ENCODE measurements at regions of chr13 and their contacts with region 1.

Region 1: DNA sequence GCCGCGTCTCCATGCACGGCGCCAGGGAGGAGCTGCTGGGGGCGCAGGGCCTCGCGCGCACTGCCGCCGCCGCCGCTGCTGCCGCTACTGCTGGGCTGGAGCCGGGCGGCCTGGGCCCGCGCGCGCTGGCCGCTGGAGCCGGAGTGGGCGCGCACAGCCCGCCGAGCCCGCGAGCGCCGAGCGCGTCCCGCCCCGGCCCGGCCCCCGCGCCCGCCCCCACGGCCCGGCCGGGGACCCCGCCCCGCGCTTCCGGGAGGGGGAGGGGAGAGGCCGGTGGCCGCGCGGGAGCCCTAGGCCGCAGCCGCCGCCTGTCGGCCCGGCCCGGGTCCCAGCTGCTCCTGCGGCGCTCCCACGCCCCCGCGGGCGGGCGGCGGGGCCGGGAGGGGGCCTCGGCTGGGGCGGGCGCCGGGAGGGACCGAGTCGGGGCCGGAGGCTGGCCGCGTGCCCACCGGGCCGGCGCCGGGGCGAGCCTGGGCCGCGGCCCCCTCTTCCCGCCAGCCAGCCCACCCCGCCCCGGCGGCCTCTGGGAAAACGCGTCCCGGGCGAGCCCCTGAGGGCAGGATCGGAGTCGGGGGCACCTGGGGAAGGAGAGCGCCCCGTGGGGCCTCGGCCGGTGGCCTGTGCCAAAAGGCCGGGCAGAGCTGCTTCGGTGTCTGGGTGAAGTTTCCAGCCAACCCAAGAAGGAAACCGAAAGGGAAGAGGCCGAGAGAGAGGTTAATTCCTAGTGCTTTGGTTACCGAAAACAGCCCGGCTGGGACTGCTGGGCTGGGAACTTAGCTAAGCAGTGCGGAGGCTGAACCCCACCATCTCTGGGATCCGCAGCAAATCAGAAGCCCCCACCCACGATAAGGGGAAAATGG is at the start of gene STK24:
- DNase-seq: peak; percentile 66
- H3K4me3 Mint-ChIP-seq: peak within 1 kb of the TSS; percentile 98
- H3K27ac Mint-ChIP-seq: peak within 1 kb of the TSS; percentile 86
- H3K4me1 Mint-ChIP-seq: peaks cover 45% of the 10 kb centered on the region
- H3K27me3 Mint-ChIP-seq: no peaks in the 10 kb centered on the region
- total RNA-seq, gene STK24: 135 and 139 TPM in 2 replicates

Region 2: GRCh38 chr13:98509271-98510155 is 67.7 kb before region 1 on chr13:
- intact Hi-C with region 1: loop called (anchors 1 kb)
- DNase-seq: peak; percentile 31
- H3K4me3 Mint-ChIP-seq: peak overlapping the region; percentile 13
- H3K27ac Mint-ChIP-seq: peak overlapping the region; percentile 65
- H3K4me1 Mint-ChIP-seq: peaks cover 80% of the 10 kb centered on the region
- H3K27me3 Mint-ChIP-seq: no peaks in the 10 kb centered on the region

Region 3: GRCh38 chr13:98542568-98543377 is 34.4 kb before region 1 on chr13:
- intact Hi-C with region 1: loop called (anchors 1 kb)
- DNase-seq: no peak
- H3K4me3 Mint-ChIP-seq: peak overlapping the region; percentile 68
- H3K27ac Mint-ChIP-seq: peak overlapping the region; percentile 74
- H3K4me1 Mint-ChIP-seq: peaks cover 83% of the 10 kb centered on the region
- H3K27me3 Mint-ChIP-seq: no peaks in the 10 kb centered on the region

Region 4: GRCh38 chr13:98664039-98664438 is 86.8 kb after region 1 on chr13:
- intact Hi-C with region 1: loop called (anchors 1 kb)
- DNase-seq: peak; percentile 21
- H3K4me3 Mint-ChIP-seq: no peak overlapping the region
- H3K27ac Mint-ChIP-seq: peak overlapping the region; percentile 72
- H3K4me1 Mint-ChIP-seq: peaks cover 15% of the 10 kb centered on the region
- H3K27me3 Mint-ChIP-seq: peaks cover 17% of the 10 kb centered on the region

Region 5: GRCh38 chr13:99356158-99357091 is 779.2 kb after region 1 on chr13:
- intact Hi-C with region 1: loop called (anchors 10 kb)
- DNase-seq: peak; percentile 74
- H3K4me3 Mint-ChIP-seq: peak overlapping the region; percentile 62
- H3K27ac Mint-ChIP-seq: peak overlapping the region; percentile 95
- H3K4me1 Mint-ChIP-seq: peaks cover 99% of the 10 kb centered on the region
- H3K27me3 Mint-ChIP-seq: peaks cover 3% of the 10 kb centered on the region

Measured in activated T-helper 1 cell treated with anti-CD3 and anti-CD28 coated beads, Interleukin-12 subunit alpha, Interleukin-12 subunit beta, Interleukin-2, Interleukin-4 antibody, amounts not matched to agents 30 ng/mL and 10 ng/mL and 1 ng/mL, durations not matched to agents 14 hours and 24 hours and 36 hours (primary cell).